MCF 10A (cell line): ENCODE measurements at regions of chr3 and their contacts with region 1.

Region 1: DNA sequence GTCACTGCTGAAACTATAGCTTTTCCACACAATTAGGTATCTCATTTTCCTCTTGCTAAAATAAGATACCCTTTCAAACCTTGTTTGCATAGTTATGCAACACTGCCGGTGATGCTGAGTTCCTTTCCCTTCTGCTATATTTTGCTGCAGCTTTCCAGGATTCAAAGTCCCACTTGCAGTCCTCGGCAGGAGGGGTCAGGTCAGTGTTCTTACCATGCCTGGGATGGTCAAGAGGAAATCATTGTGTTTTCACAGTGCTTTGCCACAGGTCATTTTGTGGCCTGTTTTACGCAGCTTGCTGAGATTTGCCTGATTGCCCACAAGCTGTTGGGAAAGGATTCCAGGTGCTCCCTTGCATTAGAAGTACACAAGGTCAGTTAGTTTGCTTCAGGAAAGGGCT is 156.9 kb downstream of the B3GALNT1 start:
- DNase-seq: no peak
- H3K4me3 Mint-ChIP-seq: no peak overlapping the region
- H3K27ac Mint-ChIP-seq: no peak overlapping the region
- H3K4me1 Mint-ChIP-seq: no peaks in the 10 kb centered on the region
- H3K27me3 Mint-ChIP-seq: no peaks in the 10 kb centered on the region
- CTCF ChIP-seq: no peak

Region 2: DNA sequence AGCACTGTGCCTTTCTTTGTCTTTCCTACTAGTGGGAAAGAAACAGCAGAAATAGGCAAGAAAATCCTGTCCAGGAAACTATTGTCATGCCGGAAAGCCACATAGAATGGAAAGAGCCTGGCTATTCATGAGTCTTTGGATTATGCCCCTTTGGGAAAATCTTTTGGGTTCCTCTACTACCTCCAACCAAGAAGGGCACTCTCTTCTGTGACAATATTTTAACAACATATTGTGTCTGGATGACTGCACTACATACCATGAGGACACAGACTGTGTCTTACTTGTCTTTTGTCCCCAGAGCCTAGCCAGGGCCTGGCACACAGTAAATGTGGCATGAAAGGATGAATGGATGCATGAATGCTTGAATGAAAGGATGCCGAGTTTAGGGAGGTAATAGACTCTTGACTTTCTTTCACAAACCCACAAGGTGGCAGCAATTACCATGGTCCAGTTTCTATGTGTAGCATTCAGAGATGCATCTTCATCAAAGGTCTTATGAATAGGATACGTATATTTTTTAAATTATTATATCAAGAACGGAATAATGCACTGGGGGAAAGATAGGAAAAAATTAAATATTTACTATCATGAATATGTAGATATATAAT is 241.0 kb before region 1 on chr3:
- CTCF ChIA-PET with region 1: interaction called, 93 read pairs
- POLR2A ChIA-PET with region 1: no interaction called
- intact Hi-C with region 1: no loop called
- DNase-seq: peak; percentile 65
- H3K4me3 Mint-ChIP-seq: no peak overlapping the region
- H3K27ac Mint-ChIP-seq: no peak overlapping the region
- H3K4me1 Mint-ChIP-seq: no peaks in the 10 kb centered on the region
- H3K27me3 Mint-ChIP-seq: peaks cover 20% of the 10 kb centered on the region
- CTCF ChIP-seq: peak; percentile 54